ENCODE measurements at regions of chr13 and their contacts with region 1.

Region 1: GRCh38 chr13:32001185-32001768 is 30.3 kb upstream of the FRY start:
- DNase-seq: peak in 1 of 2 experiments; percentile 56
- H3K4me3 ChIP-seq: no peak overlapping the region
- H3K27ac ChIP-seq: no peak overlapping the region
- H3K4me1 ChIP-seq: peaks cover 34% of the 10 kb centered on the region
- H3K27me3 ChIP-seq: no peaks in the 10 kb centered on the region
- CTCF ChIP-seq: peak; percentile 79

Region 2: GRCh38 chr13:31824705-31825517 is 176.4 kb before region 1 on chr13:
- CTCF ChIA-PET with region 1: no interaction called
- POLR2A ChIA-PET with region 1: no interaction called
- intact Hi-C with region 1: no loop called
- DNase-seq: no peak
- H3K4me3 ChIP-seq: no peak overlapping the region
- H3K27ac ChIP-seq: no peak overlapping the region
- H3K4me1 ChIP-seq: no peaks in the 10 kb centered on the region
- H3K27me3 ChIP-seq: peaks cover 10% of the 10 kb centered on the region; the same call in 1 of the 2 replicates
- CTCF ChIP-seq: peak; percentile 28; the same call in 1 of the 2 replicates

Region 3: GRCh38 chr13:31930901-31931522 is 70.3 kb before region 1 on chr13:
- CTCF ChIA-PET with region 1: no interaction called
- POLR2A ChIA-PET with region 1: interaction called, 16 read pairs
- intact Hi-C with region 1: loop called (anchors 5 kb)
- DNase-seq: peak in 1 of 2 experiments; percentile 46
- H3K4me3 ChIP-seq: no peak overlapping the region
- H3K27ac ChIP-seq: peak overlapping the region; percentile 54
- H3K4me1 ChIP-seq: peaks cover 49% of the 10 kb centered on the region
- H3K27me3 ChIP-seq: no peaks in the 10 kb centered on the region
- CTCF ChIP-seq: no peak

Region 4: DNA sequence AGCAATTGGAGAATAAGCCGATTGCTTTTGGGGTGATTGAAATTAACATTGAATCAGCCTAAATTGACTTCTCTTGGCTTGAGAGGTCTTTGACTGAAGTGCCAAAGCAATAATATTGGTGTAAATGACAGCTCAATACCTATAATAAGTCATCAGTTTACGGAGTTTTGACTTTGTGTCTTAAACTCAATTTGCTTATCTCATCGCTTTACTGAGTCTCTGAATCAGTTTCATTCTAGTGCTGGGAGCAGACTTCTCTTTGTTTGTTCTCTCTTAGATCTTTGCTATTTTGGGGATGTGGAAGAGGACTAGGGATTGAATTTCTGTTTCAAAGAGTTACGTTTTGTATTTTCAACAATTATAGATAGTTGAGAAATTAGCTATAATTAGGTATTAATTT is 1823.8 kb after region 1 on chr13:
- CTCF ChIA-PET with region 1: no interaction called
- POLR2A ChIA-PET with region 1: interaction called, 10 read pairs
- intact Hi-C with region 1: no loop called
- DNase-seq: no peak
- H3K4me3 ChIP-seq: no peak overlapping the region
- H3K27ac ChIP-seq: no peak overlapping the region
- H3K4me1 ChIP-seq: no peaks in the 10 kb centered on the region
- H3K27me3 ChIP-seq: no peaks in the 10 kb centered on the region
- CTCF ChIP-seq: no peak